ENCODE measurements at regions of chr20 and their contacts with region 1.

Region 1: GRCh38 chr20:49395183-49395582 is 87.3 kb downstream of the KCNB1 start:
- DNase-seq: peak; percentile 55
- H3K4me3 ChIP-seq: no peak overlapping the region
- H3K27ac ChIP-seq: peak overlapping the region; percentile 54 to 64
- H3K4me1 ChIP-seq: no peaks in the 10 kb centered on the region
- H3K27me3 ChIP-seq: no peaks in the 10 kb centered on the region
- CTCF ChIP-seq: no peak
- POLR2A ChIP-seq: no peak

Region 2: DNA sequence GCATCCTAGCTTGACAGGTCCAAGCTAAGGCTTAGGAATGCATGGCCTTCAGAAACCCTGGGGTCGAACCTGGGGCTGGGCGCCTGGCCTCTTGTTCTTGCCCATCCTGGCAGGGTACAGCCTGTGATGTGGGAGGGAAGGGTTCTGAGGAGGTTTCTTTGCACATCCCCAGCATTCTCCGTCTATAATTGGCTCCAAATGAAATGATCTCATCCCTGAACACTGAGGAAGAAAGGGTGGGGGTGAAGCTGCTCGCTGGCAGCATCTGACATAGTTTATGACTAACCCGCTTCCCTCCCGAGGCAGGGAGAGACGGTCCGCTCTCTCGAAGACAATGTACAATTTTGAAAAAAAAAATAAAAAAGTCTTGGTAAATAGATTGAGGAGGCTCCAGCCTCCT is 50.2 kb before region 1 on chr20:
- intact Hi-C with region 1: loop called (anchors 2 kb)
- DNase-seq: peak; percentile 26
- H3K4me3 ChIP-seq: no peak overlapping the region
- H3K27ac ChIP-seq: peak overlapping the region; percentile 46 to 54
- H3K4me1 ChIP-seq: no peaks in the 10 kb centered on the region
- H3K27me3 ChIP-seq: no peaks in the 10 kb centered on the region
- CTCF ChIP-seq: no peak
- POLR2A ChIP-seq: no peak

Region 3: GRCh38 chr20:49909499-49910339 is 514.5 kb after region 1 on chr20:
- intact Hi-C with region 1: no loop called
- DNase-seq: peak; percentile 55
- H3K4me3 ChIP-seq: no peak overlapping the region
- H3K27ac ChIP-seq: peak overlapping the region; percentile 66 to 82
- H3K4me1 ChIP-seq: peaks cover 22% of the 10 kb centered on the region
- H3K27me3 ChIP-seq: no peaks in the 10 kb centered on the region
- CTCF ChIP-seq: peak in 3 of 4 experiments; percentile 24 to 56 (median 36)
- POLR2A ChIP-seq: no peak

Measured in prostate gland (tissue), 2 donors.